ENCODE measurements at regions of chr22 and their contacts with region 1.

Region 1: GRCh38 chr22:49087198-49087597 is 740.5 kb downstream of the BRD1 start:
- DNase-seq: no peak
- H3K4me3 ChIP-seq: no peak overlapping the region
- H3K27ac ChIP-seq: no peak overlapping the region
- H3K4me1 ChIP-seq: no peaks in the 10 kb centered on the region
- H3K27me3 ChIP-seq: no peaks in the 10 kb centered on the region
- CTCF ChIP-seq: no peak
- EP300 ChIP-seq: no peak
- POLR2A ChIP-seq: no peak

Region 2: GRCh38 chr22:49149721-49150608 is 62.8 kb after region 1 on chr22:
- intact Hi-C with region 1: loop called in 1 of 4 experiments (anchors 10 kb)
- DNase-seq: no peak
- H3K4me3 ChIP-seq: no peak overlapping the region
- H3K27ac ChIP-seq: no peak overlapping the region
- H3K4me1 ChIP-seq: no peaks in the 10 kb centered on the region
- H3K27me3 ChIP-seq: no peaks in the 10 kb centered on the region
- CTCF ChIP-seq: no peak
- EP300 ChIP-seq: no peak
- POLR2A ChIP-seq: no peak

Measured in ovary (tissue), 10 donors.